ENCODE measurements at regions of chr7 and their contacts with region 1.

Region 1: GRCh38 chr7:130365511-130366441 is 14.5 kb upstream of the CPA1 start:
- DNase-seq: peak; percentile 70
- H3K4me3 ChIP-seq: no peak overlapping the region
- H3K27ac ChIP-seq: no peak overlapping the region
- H3K4me1 ChIP-seq: peaks cover 56% of the 10 kb centered on the region
- H3K27me3 ChIP-seq: no peaks in the 10 kb centered on the region
- CTCF ChIP-seq: no peak

Region 2: GRCh38 chr7:130180571-130181262 is 185.1 kb before region 1 on chr7:
- CTCF ChIA-PET with region 1: no interaction called
- dilution Hi-C with region 1: no loop called
- in situ Hi-C with region 1: no loop called
- intact Hi-C with region 1: loop called (anchors 1 kb)
- DNase-seq: peak; percentile 87
- H3K4me3 ChIP-seq: no peak overlapping the region
- H3K27ac ChIP-seq: no peak overlapping the region
- H3K4me1 ChIP-seq: no peaks in the 10 kb centered on the region
- H3K27me3 ChIP-seq: no peaks in the 10 kb centered on the region
- CTCF ChIP-seq: no peak

Region 3: DNA sequence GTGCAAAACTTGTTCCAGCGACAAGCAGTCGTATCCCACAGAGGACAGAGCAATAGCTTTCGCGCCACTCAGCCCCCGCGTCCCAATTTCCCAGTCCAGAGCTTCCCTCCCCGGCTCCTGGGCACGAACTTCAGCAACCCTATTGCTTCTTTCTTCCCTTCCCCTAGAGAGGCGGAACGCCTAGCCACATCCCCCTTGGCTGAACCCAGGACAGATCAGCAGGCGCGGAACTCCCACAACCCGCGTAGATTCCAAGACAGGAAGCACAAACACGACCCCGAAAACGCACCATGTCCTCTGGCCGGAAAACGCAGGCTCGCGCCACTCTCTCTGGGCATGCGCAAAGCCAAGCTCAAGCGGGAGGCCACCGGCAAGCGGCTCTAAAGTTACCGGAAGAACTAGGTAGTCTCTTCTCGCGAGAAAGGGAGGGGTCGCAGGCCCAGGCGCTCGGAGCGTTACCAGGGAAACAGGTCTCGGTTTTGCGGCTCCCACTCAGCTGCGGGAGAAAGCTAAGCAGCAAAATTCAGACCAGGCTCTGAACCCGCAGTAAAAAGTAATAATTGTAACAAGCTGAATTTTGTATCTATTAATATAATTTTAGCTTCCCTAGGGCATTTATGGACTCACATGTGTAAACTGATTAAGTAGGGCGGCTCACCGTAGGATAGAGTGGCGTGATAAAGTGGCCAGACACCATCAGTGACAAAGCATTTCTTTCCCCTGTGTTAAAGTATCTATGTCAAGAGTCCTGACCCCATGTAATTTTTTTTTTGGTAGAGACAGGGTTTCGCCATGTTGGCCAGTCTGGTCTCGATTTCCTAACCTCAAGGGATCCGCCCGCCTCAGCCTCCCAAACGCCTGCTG is 160.5 kb before region 1 on chr7 and contains the start of gene TMEM209:
- CTCF ChIA-PET with region 1: no interaction called
- dilution Hi-C with region 1: no loop called
- in situ Hi-C with region 1: no loop called
- intact Hi-C with region 1: loop called (anchors 10 kb)
- DNase-seq: peak; percentile 93
- H3K4me3 ChIP-seq: peak within 1 kb of the TSS; percentile 91 to 94 (median 91)
- H3K27ac ChIP-seq: peak within 1 kb of the TSS; percentile 89
- H3K4me1 ChIP-seq: peaks cover 8% of the 10 kb centered on the region
- H3K27me3 ChIP-seq: no peaks in the 10 kb centered on the region
- CTCF ChIP-seq: no peak
- total RNA-seq, gene TMEM209: 23.6 to 24.3 TPM

Region 4: GRCh38 chr7:130242198-130243014 is 123.4 kb before region 1 on chr7:
- CTCF ChIA-PET with region 1: no interaction called
- dilution Hi-C with region 1: no loop called
- in situ Hi-C with region 1: no loop called
- intact Hi-C with region 1: loop called (anchors 2 kb)
- DNase-seq: peak; percentile 93
- H3K4me3 ChIP-seq: no peak overlapping the region
- H3K27ac ChIP-seq: peak overlapping the region; percentile 76
- H3K4me1 ChIP-seq: peaks cover 13% of the 10 kb centered on the region
- H3K27me3 ChIP-seq: no peaks in the 10 kb centered on the region
- CTCF ChIP-seq: peak; percentile 78 to 89

Region 5: GRCh38 chr7:130486114-130486958 is 120.6 kb after region 1 on chr7:
- CTCF ChIA-PET with region 1: no interaction called
- dilution Hi-C with region 1: no loop called
- in situ Hi-C with region 1: no loop called
- intact Hi-C with region 1: loop called (anchors 5 kb)
- DNase-seq: no peak
- H3K4me3 ChIP-seq: peak overlapping the region; percentile 15 to 50 (median 45)
- H3K27ac ChIP-seq: no peak overlapping the region
- H3K4me1 ChIP-seq: peaks cover 15% of the 10 kb centered on the region
- H3K27me3 ChIP-seq: no peaks in the 10 kb centered on the region
- CTCF ChIP-seq: peak; percentile 42 to 59